Aorta (tissue), 5 donors: ENCODE measurements at regions of chr3 and their contacts with region 1.

Region 1: DNA sequence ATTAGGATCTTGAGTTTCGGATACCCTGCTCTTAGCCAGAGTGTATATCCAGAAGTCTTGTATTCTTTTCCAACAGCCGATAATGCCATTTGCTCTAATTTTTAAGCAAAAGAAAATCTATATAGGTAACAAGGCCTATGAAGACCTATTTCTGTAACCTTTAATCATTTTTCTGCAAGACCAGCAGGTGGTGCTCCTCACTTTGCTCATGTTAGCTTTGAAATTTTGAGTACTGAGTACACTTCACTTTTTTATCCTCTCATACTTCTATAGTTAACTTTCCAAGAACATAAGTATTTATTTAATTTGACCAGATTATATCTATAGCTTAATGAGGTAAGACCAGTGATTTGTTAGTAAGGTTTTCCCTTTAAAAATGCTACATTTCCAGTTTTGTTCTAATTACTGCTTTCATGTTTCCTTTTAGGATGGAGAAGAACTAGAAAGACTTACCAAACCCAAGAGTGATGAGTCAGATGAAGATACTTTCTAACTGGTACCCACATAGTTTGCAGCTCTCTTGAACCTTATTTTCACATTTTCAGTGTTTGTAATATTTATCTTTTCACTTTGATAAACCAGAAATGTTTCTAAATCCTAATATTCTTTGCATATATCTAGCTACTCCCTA is 20.5 kb downstream of the SLC35A5 start:
- DNase-seq: no peak
- ATAC-seq: no peak
- H3K4me3 ChIP-seq: no peak overlapping the region
- H3K27ac ChIP-seq: no peak overlapping the region
- H3K4me1 ChIP-seq: no peaks in the 10 kb centered on the region
- H3K27me3 ChIP-seq: no peaks in the 10 kb centered on the region

Region 2: DNA sequence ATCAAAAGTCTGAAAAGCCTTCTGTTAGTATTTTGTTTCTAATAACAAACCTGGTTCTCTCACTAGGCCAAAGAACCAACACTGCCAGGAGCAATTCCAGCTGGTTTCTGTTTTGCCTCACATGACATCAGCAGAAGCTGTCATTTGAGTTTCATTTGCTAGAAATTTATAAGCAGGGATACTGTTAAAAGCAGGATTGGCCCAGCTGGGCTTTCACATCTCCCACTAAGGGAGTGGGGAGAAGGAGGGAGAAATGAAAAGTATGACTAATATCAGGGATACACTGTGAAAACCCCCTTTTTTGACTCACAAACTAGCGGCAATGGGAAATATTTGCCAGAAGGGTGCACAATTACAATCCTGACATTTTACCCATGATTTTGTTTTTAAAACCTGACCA is 53.3 kb after region 1 on chr3:
- intact Hi-C with region 1: loop called (anchors 1 to 5 kb)
- DNase-seq: peak in 1 of 2 donors; percentile 59
- ATAC-seq: no peak
- H3K4me3 ChIP-seq: no peak overlapping the region
- H3K27ac ChIP-seq: peak overlapping the region; percentile 19 to 47
- H3K4me1 ChIP-seq: peaks cover 0 to 2% of the 10 kb centered on the region in 2 donors
- H3K27me3 ChIP-seq: no peaks in the 10 kb centered on the region

Region 3: DNA sequence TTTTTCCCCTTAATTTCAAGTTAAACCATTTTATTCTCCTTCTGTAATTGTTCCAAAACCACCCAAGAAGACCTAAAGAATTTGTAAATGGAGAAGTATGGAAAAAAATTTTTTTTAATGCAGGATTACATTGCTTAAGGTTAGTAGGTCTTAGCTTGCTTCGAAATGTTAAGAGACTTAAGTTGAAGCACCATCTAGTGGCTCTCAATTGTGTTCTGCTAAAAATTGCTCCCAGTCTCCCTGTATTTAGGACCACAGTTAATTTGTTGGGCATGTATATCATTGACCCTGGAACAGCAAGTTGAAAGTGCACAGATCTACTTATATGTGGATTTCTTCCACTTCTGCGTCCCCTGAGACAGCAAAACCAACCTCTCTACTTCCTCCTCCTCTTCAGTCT is 231.9 kb after region 1 on chr3:
- intact Hi-C with region 1: loop called (anchors 5 to 10 kb)
- DNase-seq: no peak
- ATAC-seq: peak; percentile 63
- H3K4me3 ChIP-seq: no peak overlapping the region
- H3K27ac ChIP-seq: no peak overlapping the region
- H3K4me1 ChIP-seq: peaks cover 3 to 5% of the 10 kb centered on the region in 2 donors
- H3K27me3 ChIP-seq: no peaks in the 10 kb centered on the region

Region 4: GRCh38 chr3:112979240-112979832 is 397.0 kb after region 1 on chr3:
- intact Hi-C with region 1: loop called (anchors 5 kb)
- DNase-seq: no peak
- ATAC-seq: no peak
- H3K4me3 ChIP-seq: no peak overlapping the region
- H3K27ac ChIP-seq: no peak overlapping the region
- H3K4me1 ChIP-seq: no peaks in the 10 kb centered on the region
- H3K27me3 ChIP-seq: no peaks in the 10 kb centered on the region